ENCODE measurements at regions of chr12 and their contacts with region 1.

Region 1: DNA sequence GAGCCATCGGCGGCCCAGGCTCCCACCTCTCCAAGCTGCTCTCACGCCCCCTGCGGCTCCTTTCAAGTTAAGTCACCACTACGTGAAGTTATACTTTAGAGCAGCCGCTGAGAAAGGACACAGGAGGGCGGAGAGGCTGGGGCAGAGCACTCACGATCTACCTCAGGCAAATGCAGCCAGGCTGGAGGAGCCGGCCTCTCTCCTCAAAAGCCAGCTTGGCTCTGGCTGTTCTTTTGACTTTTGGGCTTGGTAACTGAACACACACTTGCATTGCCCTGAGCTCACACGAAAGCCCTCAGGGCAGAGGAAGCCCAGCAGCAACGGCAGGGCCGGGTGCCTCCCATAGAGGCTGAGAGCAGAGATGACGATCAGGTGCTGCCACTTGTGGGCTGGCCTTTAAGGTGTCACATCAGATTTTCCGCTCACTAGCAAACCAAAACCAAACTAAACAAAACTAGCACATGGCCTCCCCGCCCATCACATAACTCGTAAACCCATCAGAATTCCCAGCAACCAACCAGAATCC is 75.2 kb downstream of the PITPNM2 start:
- DNase-seq: peak; percentile 88
- H3K4me3 Mint-ChIP-seq: peak overlapping the region; percentile 79
- H3K27ac Mint-ChIP-seq: peak overlapping the region; percentile 91
- H3K4me1 Mint-ChIP-seq: peaks cover 51% of the 10 kb centered on the region
- H3K27me3 Mint-ChIP-seq: no peaks in the 10 kb centered on the region

Region 2: GRCh38 chr12:123063527-123063926 is 12.2 kb before region 1 on chr12:
- CTCF ChIA-PET with region 1: interaction called, 12 read pairs
- POLR2A ChIA-PET with region 1: interaction called, 5 read pairs
- DNase-seq: peak; percentile 26
- H3K4me3 Mint-ChIP-seq: no peak overlapping the region
- H3K27ac Mint-ChIP-seq: no peak overlapping the region
- H3K4me1 Mint-ChIP-seq: peaks cover 35% of the 10 kb centered on the region
- H3K27me3 Mint-ChIP-seq: no peaks in the 10 kb centered on the region

Region 3: DNA sequence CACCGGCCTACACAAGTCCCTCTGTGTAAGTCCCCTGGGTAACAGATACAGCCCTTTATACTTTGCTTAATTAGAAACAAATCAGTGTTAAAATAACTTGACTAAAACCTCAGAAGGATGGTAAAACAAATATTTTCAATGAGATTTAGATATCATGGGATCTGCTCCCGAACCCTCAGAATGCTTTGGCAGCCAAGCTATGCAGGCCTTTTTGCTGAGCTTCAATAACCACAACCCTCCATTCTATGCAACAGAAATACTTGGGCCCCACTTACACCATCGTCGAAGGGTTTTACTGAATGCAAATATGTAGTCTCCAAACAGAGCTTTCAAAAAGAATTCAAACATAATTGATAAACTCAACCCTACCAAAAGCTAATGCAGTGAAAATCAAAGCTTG is 104.5 kb after region 1 on chr12:
- CTCF ChIA-PET with region 1: no interaction called
- POLR2A ChIA-PET with region 1: no interaction called
- DNase-seq: no peak
- H3K4me3 Mint-ChIP-seq: no peak overlapping the region
- H3K27ac Mint-ChIP-seq: no peak overlapping the region
- H3K4me1 Mint-ChIP-seq: no peaks in the 10 kb centered on the region
- H3K27me3 Mint-ChIP-seq: no peaks in the 10 kb centered on the region